AG04449 (cell line): ENCODE measurements at regions of chr3 and their contacts with region 1.

Region 1: DNA sequence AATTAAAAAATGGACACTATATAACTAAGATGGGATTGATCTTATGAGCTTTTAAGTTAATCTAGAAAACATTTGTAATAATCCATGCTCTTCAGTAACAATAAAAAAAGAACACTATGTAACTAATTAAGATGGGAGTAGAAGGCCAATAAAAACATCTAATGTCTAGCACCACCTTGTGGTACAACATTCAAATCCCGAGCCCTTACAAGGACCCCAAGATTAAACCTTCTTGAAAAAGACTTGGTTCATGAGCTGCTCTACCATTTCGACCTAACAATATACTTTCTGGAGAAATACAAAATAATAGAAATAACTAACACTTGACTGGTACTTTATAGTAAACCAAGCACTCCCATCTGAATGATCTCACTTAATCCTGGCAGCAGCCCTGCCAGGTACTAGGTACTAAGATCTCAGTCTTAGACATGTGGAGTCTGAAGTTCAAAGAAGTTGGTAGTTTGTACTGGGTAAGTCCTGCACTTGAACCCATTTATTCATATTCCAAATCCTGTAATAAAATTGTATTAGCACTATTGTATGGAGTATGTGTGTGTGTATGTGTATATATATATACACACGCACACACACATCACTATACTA is 21.8 kb downstream of the METTL6 start:
- DNase-seq: no peak
- H3K4me3 ChIP-seq: no peak overlapping the region
- CTCF ChIP-seq: peak; percentile 48

Region 2: GRCh38 chr3:15205934-15206661 is 199.5 kb before region 1 on chr3 and contains the start of gene CAPN7:
- CTCF ChIA-PET with region 1: interaction called, 95 read pairs
- POLR2A ChIA-PET with region 1: no interaction called
- DNase-seq: peak; percentile 46
- H3K4me3 ChIP-seq: peak within 1 kb of the TSS; percentile 86
- CTCF ChIP-seq: peak; percentile 55

Region 3: DNA sequence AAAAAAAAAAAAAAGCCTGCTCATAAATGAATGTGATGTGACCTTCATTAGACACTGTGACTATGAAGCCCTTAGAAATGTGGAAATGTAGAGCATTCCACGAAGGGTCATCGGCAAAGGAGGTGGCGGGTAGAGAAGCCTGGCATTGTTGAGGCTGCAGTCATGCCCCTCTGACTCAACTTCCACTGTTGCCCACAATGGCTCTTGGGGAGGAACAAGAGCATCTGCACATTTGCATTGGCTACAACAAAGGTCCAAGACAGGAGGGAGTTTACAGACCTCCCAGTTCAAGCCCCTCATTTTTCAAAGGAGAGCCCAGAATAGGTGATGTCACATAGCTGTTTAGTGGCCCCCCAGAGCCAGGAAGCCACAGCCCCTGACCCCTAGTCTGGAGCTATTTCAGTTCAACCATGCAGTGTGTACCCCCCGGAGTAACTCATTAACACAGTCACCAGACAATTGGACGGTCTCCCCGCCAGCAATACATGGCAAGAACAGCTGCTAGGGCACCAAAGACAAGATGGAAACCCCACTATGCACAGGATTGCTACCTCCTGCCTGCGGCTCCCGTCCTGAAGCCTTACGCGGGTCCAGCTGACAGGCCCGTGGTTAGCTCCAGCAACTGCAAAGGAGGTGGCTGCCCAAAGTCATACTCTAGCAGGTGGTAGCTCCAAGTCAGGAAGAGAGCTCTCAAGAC is 129.4 kb before region 1 on chr3:
- CTCF ChIA-PET with region 1: interaction called, 409 read pairs
- POLR2A ChIA-PET with region 1: no interaction called
- DNase-seq: no peak
- H3K4me3 ChIP-seq: no peak overlapping the region
- CTCF ChIP-seq: no peak

Region 4: GRCh38 chr3:15384510-15385237 is 20.9 kb before region 1 on chr3:
- CTCF ChIA-PET with region 1: interaction called, 17 read pairs
- POLR2A ChIA-PET with region 1: no interaction called
- DNase-seq: no peak
- H3K4me3 ChIP-seq: no peak overlapping the region
- CTCF ChIP-seq: no peak

Region 5: GRCh38 chr3:15500107-15500724 is 94.7 kb after region 1 on chr3:
- CTCF ChIA-PET with region 1: no interaction called
- POLR2A ChIA-PET with region 1: no interaction called
- DNase-seq: no peak
- H3K4me3 ChIP-seq: no peak overlapping the region
- CTCF ChIP-seq: no peak

Region 6: DNA sequence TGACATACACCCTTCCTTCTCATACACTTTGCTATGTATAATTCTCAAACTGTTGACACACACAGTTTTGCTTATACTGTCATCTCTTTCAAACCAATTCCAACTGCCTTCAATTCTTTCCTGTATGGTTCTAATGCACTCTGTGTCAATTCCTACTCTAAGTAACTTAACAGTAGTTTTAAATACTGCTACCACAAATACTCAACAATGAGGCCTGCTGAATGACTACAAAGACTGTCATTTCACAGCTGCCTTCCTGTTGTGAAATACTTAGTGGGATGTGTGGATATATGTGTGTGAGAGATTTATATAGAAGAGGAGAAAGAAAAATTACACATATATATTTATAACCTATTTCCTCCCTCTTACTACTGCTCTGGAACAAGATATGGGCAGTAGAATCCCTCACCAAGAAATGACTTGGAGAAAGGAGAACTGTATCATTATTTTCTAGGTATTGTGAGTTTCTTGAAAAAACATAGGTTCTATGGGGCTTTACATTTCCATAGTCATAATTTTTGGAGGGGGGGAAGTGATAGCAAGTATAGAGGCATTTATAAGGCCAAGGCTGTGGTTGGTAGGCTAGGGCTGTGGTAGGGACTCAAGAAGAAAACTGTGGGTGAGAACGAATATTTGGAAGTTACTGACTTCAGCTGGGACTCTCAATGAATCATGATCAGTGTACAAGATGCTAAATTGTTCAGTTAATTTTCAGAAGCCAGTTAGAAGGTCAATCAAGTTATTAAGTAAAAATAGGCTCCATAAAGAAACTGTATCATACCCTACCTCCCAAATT is 303.5 kb after region 1 on chr3:
- CTCF ChIA-PET with region 1: no interaction called
- POLR2A ChIA-PET with region 1: no interaction called
- DNase-seq: peak; percentile 46
- H3K4me3 ChIP-seq: no peak overlapping the region
- CTCF ChIP-seq: no peak